MCF 10A (cell line): ENCODE measurements at regions of chr11 and their contacts with region 1.

Region 1: GRCh38 chr11:96342961-96343711 is at the start of gene MAML2:
- DNase-seq: peak; percentile 93
- H3K4me3 Mint-ChIP-seq: peak within 1 kb of the TSS; percentile 95
- H3K27ac Mint-ChIP-seq: peak within 1 kb of the TSS; percentile 94
- H3K4me1 Mint-ChIP-seq: peaks cover 35% of the 10 kb centered on the region
- H3K27me3 Mint-ChIP-seq: no peaks in the 10 kb centered on the region
- CTCF ChIP-seq: peak; percentile 97
- total RNA-seq, gene MAML2: 5.3 and 8.6 TPM in 2 replicates

Region 2: DNA sequence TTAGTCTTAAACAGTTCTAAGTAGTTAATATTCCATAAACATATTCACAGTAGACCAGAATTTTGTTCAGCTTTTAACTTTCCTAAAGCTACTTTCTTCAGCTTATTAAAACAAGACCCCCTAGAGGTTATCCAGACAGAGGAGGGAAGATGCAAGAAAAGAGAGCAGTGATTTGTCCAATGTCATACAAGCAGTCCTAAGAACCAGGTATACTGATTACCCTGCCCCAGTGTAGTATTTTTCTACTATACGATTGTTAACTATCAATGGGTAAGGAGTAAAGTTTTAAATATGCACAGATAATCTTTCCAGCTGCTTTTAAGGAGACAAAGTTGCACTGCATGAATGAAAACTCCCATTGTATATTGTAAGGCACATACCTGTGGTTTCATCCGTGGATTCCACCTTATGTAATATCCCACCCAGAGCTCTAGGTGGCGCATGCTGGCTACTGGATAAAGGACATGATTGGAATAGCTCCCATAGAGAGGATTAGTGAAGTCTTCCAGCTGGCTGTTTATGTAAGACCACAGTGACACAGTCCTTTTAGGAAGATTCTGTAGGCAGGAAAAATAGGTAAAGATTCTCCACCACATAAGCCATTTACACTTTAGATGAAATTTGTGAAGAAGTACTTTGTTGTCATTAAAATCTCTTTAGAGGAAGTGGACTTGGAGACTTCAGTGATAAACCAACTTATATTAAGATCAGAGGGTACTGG is 507.2 kb before region 1 on chr11:
- CTCF ChIA-PET with region 1: interaction called, 41 read pairs
- POLR2A ChIA-PET with region 1: interaction called, 13 read pairs
- intact Hi-C with region 1: loop called (anchors 1 kb)
- DNase-seq: peak; percentile 89
- H3K4me3 Mint-ChIP-seq: no peak overlapping the region
- H3K27ac Mint-ChIP-seq: peak overlapping the region; percentile 17
- H3K4me1 Mint-ChIP-seq: peaks cover 11% of the 10 kb centered on the region
- H3K27me3 Mint-ChIP-seq: no peaks in the 10 kb centered on the region
- CTCF ChIP-seq: peak; percentile 72

Region 3: GRCh38 chr11:96045622-96046456 is 297.3 kb before region 1 on chr11:
- CTCF ChIA-PET with region 1: interaction called, 200 read pairs
- POLR2A ChIA-PET with region 1: no interaction called
- intact Hi-C with region 1: no loop called
- DNase-seq: no peak
- H3K4me3 Mint-ChIP-seq: no peak overlapping the region
- H3K27ac Mint-ChIP-seq: no peak overlapping the region
- H3K4me1 Mint-ChIP-seq: no peaks in the 10 kb centered on the region
- H3K27me3 Mint-ChIP-seq: no peaks in the 10 kb centered on the region
- CTCF ChIP-seq: no peak

Region 4: DNA sequence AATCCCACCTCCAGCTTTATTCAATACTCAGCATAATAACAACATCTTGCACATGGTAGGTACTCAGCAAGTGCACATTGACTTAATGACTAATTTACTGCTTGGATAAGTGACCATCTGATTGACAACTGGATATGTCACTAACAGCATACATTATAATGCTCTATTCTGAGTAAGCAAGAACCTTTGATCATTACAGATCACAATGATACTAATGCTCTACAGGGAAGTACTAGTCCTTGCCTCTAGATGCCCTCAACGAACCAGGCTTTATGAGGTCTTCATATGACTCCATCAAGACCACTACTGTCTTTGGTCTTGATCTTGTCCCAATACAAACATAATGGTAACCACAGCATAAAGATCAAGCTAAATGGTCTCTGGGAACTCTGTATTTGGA is 251.7 kb before region 1 on chr11:
- CTCF ChIA-PET with region 1: interaction called, 10 read pairs
- POLR2A ChIA-PET with region 1: interaction called, 3 read pairs
- intact Hi-C with region 1: loop called (anchors 1 kb)
- DNase-seq: peak; percentile 24
- H3K4me3 Mint-ChIP-seq: no peak overlapping the region
- H3K27ac Mint-ChIP-seq: no peak overlapping the region
- H3K4me1 Mint-ChIP-seq: no peaks in the 10 kb centered on the region
- H3K27me3 Mint-ChIP-seq: no peaks in the 10 kb centered on the region
- CTCF ChIP-seq: no peak

Region 5: DNA sequence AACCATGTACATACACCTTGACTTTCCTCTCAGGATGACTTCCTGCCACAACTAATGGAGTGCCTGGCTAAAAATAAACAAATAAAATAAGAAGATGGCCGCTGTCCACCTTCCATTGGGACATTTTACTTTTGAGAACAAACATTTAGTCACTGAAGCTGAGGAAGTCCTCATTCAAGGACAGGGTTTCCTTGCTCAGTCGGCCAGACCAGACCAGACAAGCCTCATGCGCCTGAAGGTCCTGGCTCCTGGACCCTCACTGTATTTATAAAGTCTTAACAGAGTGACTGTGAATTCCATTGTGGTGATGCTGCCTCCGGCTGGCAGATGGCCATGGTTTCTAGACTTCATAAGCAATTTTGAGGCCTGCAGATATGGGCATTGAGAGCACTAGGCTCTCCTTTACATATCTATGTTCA is 114.7 kb before region 1 on chr11:
- CTCF ChIA-PET with region 1: interaction called, 61 read pairs
- POLR2A ChIA-PET with region 1: interaction called, 81 read pairs
- intact Hi-C with region 1: loop called (anchors 2 kb)
- DNase-seq: peak; percentile 92
- H3K4me3 Mint-ChIP-seq: no peak overlapping the region
- H3K27ac Mint-ChIP-seq: peak overlapping the region; percentile 97
- H3K4me1 Mint-ChIP-seq: peaks cover 48% of the 10 kb centered on the region
- H3K27me3 Mint-ChIP-seq: no peaks in the 10 kb centered on the region
- CTCF ChIP-seq: no peak

Region 6: GRCh38 chr11:96279018-96279895 is 63.9 kb before region 1 on chr11:
- CTCF ChIA-PET with region 1: interaction called, 28 read pairs
- POLR2A ChIA-PET with region 1: interaction called, 13 read pairs
- intact Hi-C with region 1: no loop called
- DNase-seq: peak; percentile 66
- H3K4me3 Mint-ChIP-seq: no peak overlapping the region
- H3K27ac Mint-ChIP-seq: peak overlapping the region; percentile 25
- H3K4me1 Mint-ChIP-seq: peaks cover 35% of the 10 kb centered on the region
- H3K27me3 Mint-ChIP-seq: no peaks in the 10 kb centered on the region
- CTCF ChIP-seq: no peak

Region 7: DNA sequence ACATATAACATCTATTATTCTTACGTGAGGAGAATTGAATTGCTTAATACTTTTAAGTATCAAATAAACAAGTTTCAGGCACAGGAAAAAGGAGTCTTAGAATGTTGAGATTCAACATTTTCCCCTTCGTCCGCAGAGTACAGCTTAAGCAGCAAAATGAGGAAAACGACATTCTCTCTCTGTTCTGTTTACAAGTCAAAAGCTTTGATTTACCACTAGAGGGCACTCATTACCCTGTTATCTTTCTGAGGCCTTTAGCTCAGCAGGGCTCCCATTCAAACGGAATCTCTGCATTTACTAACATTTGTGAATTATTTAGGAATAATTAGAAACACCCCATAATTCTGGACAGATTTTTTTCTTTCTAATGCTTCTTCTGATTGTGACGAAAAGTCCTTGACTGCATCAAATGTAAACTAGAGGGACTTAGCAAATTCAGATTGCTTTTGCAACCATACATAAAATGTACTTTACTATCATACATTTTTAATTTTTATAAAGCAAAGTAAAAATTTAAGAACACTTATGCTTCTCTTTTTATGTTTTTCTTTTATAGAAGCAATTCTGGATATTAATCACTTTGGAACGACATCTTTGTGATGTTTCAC is 121.7 kb after region 1 on chr11:
- CTCF ChIA-PET with region 1: no interaction called
- POLR2A ChIA-PET with region 1: no interaction called
- intact Hi-C with region 1: no loop called
- DNase-seq: peak; percentile 67
- H3K4me3 Mint-ChIP-seq: no peak overlapping the region
- H3K27ac Mint-ChIP-seq: no peak overlapping the region
- H3K4me1 Mint-ChIP-seq: no peaks in the 10 kb centered on the region
- H3K27me3 Mint-ChIP-seq: peaks cover 44% of the 10 kb centered on the region
- CTCF ChIP-seq: peak; percentile 78